ENCODE measurements at regions of chr7 and their contacts with region 1.

Region 1: GRCh38 chr7:35617041-35617440 is 77.9 kb downstream of the HERPUD2 start:
- DNase-seq: no peak
- ATAC-seq: no peak
- H3K4me3 ChIP-seq: no peak overlapping the region
- H3K27ac ChIP-seq: no peak overlapping the region
- H3K4me1 ChIP-seq: no peaks in the 10 kb centered on the region
- H3K27me3 ChIP-seq: no peaks in the 10 kb centered on the region
- CTCF ChIP-seq: no peak

Region 2: DNA sequence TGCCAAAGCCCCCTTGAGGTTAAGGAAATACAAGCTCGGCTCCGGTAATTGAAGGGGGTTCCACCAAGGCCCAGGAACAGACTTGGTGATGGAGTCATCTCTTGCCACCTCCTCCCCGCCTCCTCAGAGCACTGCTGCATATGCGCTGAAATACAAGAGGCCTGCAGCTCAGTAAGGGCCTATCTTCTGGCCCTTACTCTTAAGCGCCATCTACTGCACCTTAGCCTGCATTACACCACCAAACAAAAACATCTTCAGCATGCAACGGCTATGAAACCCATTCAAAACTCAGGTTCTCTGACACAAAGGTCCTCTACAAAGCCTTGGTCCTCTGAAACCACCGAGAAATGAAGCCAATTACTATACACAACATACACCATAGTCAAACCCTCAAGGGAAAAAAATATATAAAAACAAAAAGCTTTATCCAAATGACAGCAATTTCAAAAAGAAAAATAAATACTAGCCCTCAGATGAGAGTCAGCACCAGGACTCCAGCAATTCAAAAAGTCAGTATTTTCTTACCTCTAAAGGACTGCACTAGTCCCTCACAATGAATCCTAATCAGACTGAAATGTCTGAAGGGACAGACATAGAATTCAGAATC is 186.4 kb before region 1 on chr7:
- intact Hi-C with region 1: loop called in 5 of 10 experiments (anchors 5 to 10 kb)
- DNase-seq: no peak
- ATAC-seq: no peak
- H3K4me3 ChIP-seq: no peak overlapping the region
- H3K27ac ChIP-seq: no peak overlapping the region
- H3K4me1 ChIP-seq: no peaks in the 10 kb centered on the region
- H3K27me3 ChIP-seq: no peaks in the 10 kb centered on the region
- CTCF ChIP-seq: peak in 1 of 9 donors; percentile 25